Heart right ventricle (tissue), 16 donors: ENCODE measurements at regions of chr17 and their contacts with region 1.

Region 1: GRCh38 chr17:35312790-35313711 is 60.4 kb downstream of the SLFN11 start:
- DNase-seq: peak; percentile 33 to 60
- ATAC-seq: peak; percentile 84 to 92 (median 90)
- H3K4me3 ChIP-seq: peak overlapping the region in 9 of 10 donors; percentile 31 to 58 (median 53)
- H3K27ac ChIP-seq: peak overlapping the region; percentile 25 to 91 (median 80)
- H3K4me1 ChIP-seq: peaks cover 7 to 35% (median 33%) of the 10 kb centered on the region in 9 donors
- H3K27me3 ChIP-seq: no peaks in the 10 kb centered on the region
- CTCF ChIP-seq: peak; percentile 55 to 91 (median 83)

Region 2: GRCh38 chr17:35022536-35023063 is 290.5 kb before region 1 on chr17:
- intact Hi-C with region 1: no loop called
- DNase-seq: peak; percentile 52 to 71
- ATAC-seq: peak; percentile 85 to 96 (median 94)
- H3K4me3 ChIP-seq: no peak overlapping the region
- H3K27ac ChIP-seq: peak overlapping the region; percentile 49 to 90 (median 78)
- H3K4me1 ChIP-seq: peaks cover 0 to 33% (median 18%) of the 10 kb centered on the region in 9 donors
- H3K27me3 ChIP-seq: no peaks in the 10 kb centered on the region
- CTCF ChIP-seq: peak in 1 of 9 donors; percentile 22

Region 3: DNA sequence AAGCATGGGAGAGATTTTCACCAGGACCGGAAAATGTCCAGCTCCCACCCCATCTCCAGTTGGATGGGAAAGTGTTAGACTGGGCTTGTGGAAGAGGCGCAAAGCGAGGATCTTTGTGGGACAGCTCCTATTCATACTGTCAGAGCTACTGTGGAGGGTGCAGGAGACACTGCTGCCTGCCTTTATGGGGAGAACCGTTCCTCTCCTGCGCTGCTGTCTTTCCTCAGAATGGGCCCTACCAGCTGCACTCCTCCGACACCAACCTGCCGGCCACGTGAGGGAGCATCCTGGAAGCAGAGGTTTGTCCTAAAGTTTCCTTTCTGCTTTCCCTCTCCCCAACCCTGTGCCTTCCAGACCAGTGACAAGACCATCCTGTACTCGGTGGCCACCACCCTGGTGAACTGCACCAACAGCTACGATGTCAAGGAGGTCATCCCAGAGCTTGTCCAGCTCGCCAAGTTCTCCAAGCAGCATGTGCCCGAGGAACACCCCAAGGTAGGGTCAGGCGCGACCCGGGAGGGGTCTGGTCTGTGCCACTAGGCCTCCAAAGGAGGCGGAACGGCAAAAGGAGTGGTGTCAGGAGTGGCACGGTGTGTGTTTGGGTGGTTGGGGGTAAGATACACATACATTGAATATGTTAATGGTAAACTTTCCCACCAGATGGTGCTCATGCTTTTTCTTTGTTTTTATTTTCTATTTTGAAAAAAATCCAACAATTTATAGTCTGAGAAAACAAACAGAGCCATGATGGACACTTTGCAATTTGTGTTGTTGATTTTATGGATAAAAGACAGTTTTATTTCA is 141.9 kb before region 1 on chr17:
- intact Hi-C with region 1: loop called in 2 of 10 experiments (anchors 5 to 10 kb)
- DNase-seq: no peak
- ATAC-seq: peak in 3 of 8 donors; percentile 16 to 46 (median 32)
- H3K4me3 ChIP-seq: no peak overlapping the region
- H3K27ac ChIP-seq: no peak overlapping the region
- H3K4me1 ChIP-seq: peaks cover 0 to 15% (median 0%) of the 10 kb centered on the region in 9 donors
- H3K27me3 ChIP-seq: no peaks in the 10 kb centered on the region
- CTCF ChIP-seq: peak in 7 of 9 donors; percentile 32 to 56 (median 41)

Region 4: GRCh38 chr17:35218915-35219314 is 94.1 kb before region 1 on chr17:
- intact Hi-C with region 1: no loop called
- DNase-seq: peak in 1 of 2 donors; percentile 11
- ATAC-seq: peak in 7 of 8 donors; percentile 60 to 90 (median 74)
- H3K4me3 ChIP-seq: no peak overlapping the region
- H3K27ac ChIP-seq: peak overlapping the region in 9 of 10 donors; percentile 21 to 80 (median 69)
- H3K4me1 ChIP-seq: peaks cover 0 to 64% (median 19%) of the 10 kb centered on the region in 9 donors
- H3K27me3 ChIP-seq: peaks cover 0 to 6% (median 0%) of the 10 kb centered on the region in 7 donors
- CTCF ChIP-seq: no peak

Region 5: DNA sequence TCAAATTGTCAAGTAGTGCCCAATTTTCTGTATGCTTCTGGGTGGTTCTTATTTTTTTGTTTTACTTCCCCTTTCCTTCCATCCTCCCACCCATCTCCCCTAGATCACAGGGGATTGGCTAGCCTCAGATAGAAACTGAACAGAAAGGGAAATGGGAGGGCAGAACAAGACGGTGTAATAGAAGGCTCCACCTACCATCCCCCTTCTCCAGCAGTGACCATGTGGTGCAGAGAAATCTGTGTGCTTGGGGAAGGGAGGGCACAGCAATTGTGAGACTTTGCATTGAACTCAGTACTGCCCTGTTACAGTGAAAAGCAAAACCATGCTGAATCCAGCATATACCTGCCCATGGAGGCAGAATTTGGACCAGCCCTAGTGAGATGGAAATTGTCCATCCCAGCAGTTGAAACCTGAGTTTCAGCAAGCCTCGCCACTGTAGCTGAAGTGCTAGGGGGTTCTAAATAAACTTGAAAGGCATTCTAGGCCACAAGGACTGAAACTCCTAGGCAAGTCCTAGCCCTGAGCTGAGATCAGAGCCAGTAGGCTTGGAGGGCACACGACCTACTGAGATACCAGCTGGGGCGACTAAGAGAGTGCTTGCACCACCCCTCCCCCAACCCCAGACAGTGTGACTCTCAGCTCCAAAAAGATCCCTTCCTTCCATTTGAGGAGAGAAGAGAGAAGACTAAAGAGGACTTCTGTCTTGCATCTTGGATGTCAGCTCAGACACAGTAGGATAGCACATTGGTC is 55.2 kb after region 1 on chr17:
- intact Hi-C with region 1: loop called in 3 of 10 experiments (anchors 10 kb)
- DNase-seq: peak in 1 of 2 donors; percentile 26
- ATAC-seq: peak in 7 of 8 donors; percentile 79 to 94 (median 87)
- H3K4me3 ChIP-seq: no peak overlapping the region
- H3K27ac ChIP-seq: peak overlapping the region in 1 of 10 donors; percentile 57
- H3K4me1 ChIP-seq: peaks cover 0 to 55% (median 10%) of the 10 kb centered on the region in 9 donors
- H3K27me3 ChIP-seq: peaks cover 0 to 4% (median 0%) of the 10 kb centered on the region in 7 donors
- CTCF ChIP-seq: no peak

Region 6: DNA sequence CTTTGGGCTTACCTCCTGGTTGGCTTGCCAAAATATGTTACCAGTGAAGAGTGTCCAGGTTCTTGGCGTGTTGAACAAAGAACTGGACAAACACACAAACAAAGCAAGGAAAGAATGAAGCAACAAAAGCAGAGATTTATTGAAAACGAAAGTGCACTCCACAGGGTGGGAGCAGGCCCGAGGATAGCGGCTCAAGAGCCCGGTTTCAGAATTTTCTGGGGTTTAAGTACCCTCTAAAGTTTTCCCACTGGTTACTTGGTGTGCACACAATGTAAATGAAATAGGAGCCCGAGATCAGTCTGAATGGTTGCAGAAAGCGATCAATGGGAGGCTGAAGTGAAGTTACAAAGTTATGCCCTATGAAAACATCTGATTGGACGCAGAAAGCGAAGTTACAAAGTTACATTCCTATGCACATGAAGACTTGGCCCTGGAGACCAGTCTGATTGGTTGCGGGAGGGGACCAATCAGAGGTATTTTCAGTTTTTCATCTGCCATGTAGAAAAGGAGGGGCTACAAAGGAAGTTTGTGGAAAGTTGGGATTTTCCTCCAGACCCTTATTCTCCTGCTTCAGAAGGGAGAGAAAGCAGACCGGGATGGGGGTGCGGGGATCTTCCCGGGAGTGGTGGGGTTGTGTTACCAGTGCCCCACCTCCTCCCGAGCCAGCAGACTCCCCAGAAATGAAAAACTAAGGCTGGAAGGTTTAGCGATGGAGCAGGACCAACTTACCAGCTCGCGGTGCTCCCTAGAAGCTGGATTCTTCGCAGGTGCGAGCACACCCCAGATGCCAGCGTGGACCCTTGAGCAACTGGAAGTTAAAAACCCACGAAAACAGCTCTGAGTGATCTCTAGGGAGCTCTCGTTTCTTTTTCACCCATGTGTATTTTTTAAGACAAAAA is 119.4 kb after region 1 on chr17 and contains the start of gene SLFN12:
- intact Hi-C with region 1: loop called in 2 of 10 experiments (anchors 2 to 10 kb)
- DNase-seq: peak in 1 of 2 donors; percentile 79
- ATAC-seq: peak; percentile 87 to 96 (median 92)
- H3K4me3 ChIP-seq: peak within 1 kb of the TSS; percentile 50 to 73 (median 64)
- H3K27ac ChIP-seq: peak within 1 kb of the TSS; percentile 83 to 95 (median 92)
- H3K4me1 ChIP-seq: peaks cover 0 to 52% (median 27%) of the 10 kb centered on the region in 9 donors
- H3K27me3 ChIP-seq: peaks cover 0 to 2% (median 0%) of the 10 kb centered on the region in 7 donors
- CTCF ChIP-seq: no peak
- total RNA-seq, gene SLFN12: 2.0 to 7.8 (median 4.0) TPM

Region 7: GRCh38 chr17:35540589-35541404 is 227.7 kb after region 1 on chr17:
- intact Hi-C with region 1: loop called in 6 of 10 experiments (anchors 1 to 5 kb)
- DNase-seq: peak in 1 of 2 donors; percentile 35
- ATAC-seq: peak in 7 of 8 donors; percentile 39 to 70 (median 57)
- H3K4me3 ChIP-seq: peak overlapping the region in 9 of 10 donors; percentile 10 to 46 (median 42)
- H3K27ac ChIP-seq: peak overlapping the region; percentile 4 to 88 (median 71)
- H3K4me1 ChIP-seq: peaks cover 3 to 68% (median 39%) of the 10 kb centered on the region in 9 donors
- H3K27me3 ChIP-seq: no peaks in the 10 kb centered on the region
- CTCF ChIP-seq: no peak